GM12878 (cell line): ENCODE measurements at regions of chr5 and their contacts with region 1.

Region 1: DNA sequence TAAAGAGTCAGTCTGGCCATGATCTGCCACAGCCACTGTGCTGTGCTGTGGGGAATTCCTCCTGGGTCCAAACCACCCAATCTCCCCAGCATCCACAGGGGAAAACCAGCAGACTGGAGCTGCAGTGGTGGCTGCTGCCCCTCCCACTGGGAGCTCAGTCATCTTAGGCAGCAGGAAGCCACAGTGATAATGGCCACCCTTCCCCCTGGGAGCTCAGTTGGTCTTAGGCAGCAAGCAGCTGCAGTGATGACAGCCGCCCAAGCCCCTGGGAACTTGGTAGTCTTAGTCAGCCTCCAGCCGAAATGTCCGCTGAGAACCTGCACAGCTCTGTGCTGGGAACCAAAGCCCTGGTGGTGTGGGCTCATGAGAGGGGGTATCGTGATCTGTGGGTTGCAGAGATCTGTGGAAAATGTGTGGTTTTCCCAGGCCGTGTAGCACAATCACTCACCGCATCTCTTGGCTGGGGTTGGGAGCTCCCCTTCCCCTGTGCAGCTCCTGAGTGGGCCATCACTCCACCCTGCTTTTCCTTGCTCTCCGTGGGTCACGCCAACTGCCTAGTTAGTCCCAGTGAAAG is 38.4 kb upstream of the SMIM15 start:
- DNase-seq: peak; percentile 51
- ATAC-seq: peak; percentile 83
- H3K4me3 ChIP-seq: no peak overlapping the region
- H3K27ac ChIP-seq: peak overlapping the region; percentile 28; the same call in 1 of the 2 replicates
- H3K4me1 ChIP-seq: peaks cover 2% of the 10 kb centered on the region; the same call in 1 of the 2 replicates
- H3K27me3 ChIP-seq: no peaks in the 10 kb centered on the region
- CTCF ChIP-seq: no peak
- EP300 ChIP-seq: peak in 1 of 2 experiments; percentile 48; a peak in 2 of 4 replicates
- POLR2A ChIP-seq: no peak
- RAD21 ChIP-seq: no peak

Region 2: GRCh38 chr5:61139100-61139873 is 61.4 kb before region 1 on chr5:
- CTCF ChIA-PET with region 1: no interaction called
- POLR2A ChIA-PET with region 1: no interaction called
- RAD21 ChIA-PET with region 1: no interaction called
- SMC1A ChIA-PET with region 1: no interaction called
- in situ Hi-C with region 1: no loop called
- intact Hi-C with region 1: no loop called
- DNase-seq: no peak
- ATAC-seq: peak; percentile 83
- H3K4me3 ChIP-seq: no peak overlapping the region
- H3K27ac ChIP-seq: no peak overlapping the region
- H3K4me1 ChIP-seq: no peaks in the 10 kb centered on the region
- H3K27me3 ChIP-seq: no peaks in the 10 kb centered on the region
- CTCF ChIP-seq: peak; percentile 17 to 32 (median 26); a peak in 4 of 6 replicates
- EP300 ChIP-seq: no peak
- POLR2A ChIP-seq: no peak
- RAD21 ChIP-seq: peak; percentile 44

Region 3: DNA sequence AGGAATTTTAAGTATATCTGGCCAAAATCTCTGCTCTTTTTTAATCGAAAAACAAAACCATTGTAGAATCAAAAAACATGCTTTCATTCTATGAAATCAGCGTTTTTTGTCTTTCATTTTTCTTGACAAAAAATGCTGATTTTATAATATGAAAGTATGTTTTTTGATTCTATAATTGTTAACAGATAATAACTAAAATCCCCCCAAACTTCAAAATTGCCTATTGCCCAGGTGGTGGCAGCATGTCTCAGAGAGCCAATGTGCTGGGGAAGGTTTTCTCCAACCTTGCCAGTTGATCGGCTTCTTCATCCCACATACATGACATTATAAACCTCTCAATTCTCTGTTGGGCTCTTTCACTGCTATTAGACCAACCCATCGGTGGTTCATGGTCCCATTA is 33.3 kb before region 1 on chr5:
- CTCF ChIA-PET with region 1: interaction called, 6 read pairs
- POLR2A ChIA-PET with region 1: interaction called, 4 read pairs
- RAD21 ChIA-PET with region 1: interaction called, 14 read pairs
- SMC1A ChIA-PET with region 1: interaction called, 24 read pairs
- in situ Hi-C with region 1: no loop called
- intact Hi-C with region 1: loop called (anchors 1 kb)
- DNase-seq: no peak
- ATAC-seq: peak; percentile 33
- H3K4me3 ChIP-seq: no peak overlapping the region
- H3K27ac ChIP-seq: no peak overlapping the region
- H3K4me1 ChIP-seq: no peaks in the 10 kb centered on the region; the same call in 1 of the 2 replicates
- H3K27me3 ChIP-seq: no peaks in the 10 kb centered on the region
- CTCF ChIP-seq: peak; percentile 31 to 73 (median 37); a peak in 5 of 6 replicates
- EP300 ChIP-seq: no peak
- POLR2A ChIP-seq: no peak
- RAD21 ChIP-seq: peak; percentile 84

Region 4: GRCh38 chr5:61186634-61187033 is 14.0 kb before region 1 on chr5:
- CTCF ChIA-PET with region 1: interaction called, 7 read pairs
- POLR2A ChIA-PET with region 1: interaction called, 5 read pairs
- RAD21 ChIA-PET with region 1: interaction called, 3 read pairs
- SMC1A ChIA-PET with region 1: interaction called, 28 read pairs
- in situ Hi-C with region 1: no loop called
- intact Hi-C with region 1: no loop called
- DNase-seq: no peak
- ATAC-seq: no peak
- H3K4me3 ChIP-seq: no peak overlapping the region
- H3K27ac ChIP-seq: no peak overlapping the region
- H3K4me1 ChIP-seq: no peaks in the 10 kb centered on the region
- H3K27me3 ChIP-seq: no peaks in the 10 kb centered on the region
- CTCF ChIP-seq: no peak
- EP300 ChIP-seq: no peak
- POLR2A ChIP-seq: no peak
- RAD21 ChIP-seq: no peak

Region 5: DNA sequence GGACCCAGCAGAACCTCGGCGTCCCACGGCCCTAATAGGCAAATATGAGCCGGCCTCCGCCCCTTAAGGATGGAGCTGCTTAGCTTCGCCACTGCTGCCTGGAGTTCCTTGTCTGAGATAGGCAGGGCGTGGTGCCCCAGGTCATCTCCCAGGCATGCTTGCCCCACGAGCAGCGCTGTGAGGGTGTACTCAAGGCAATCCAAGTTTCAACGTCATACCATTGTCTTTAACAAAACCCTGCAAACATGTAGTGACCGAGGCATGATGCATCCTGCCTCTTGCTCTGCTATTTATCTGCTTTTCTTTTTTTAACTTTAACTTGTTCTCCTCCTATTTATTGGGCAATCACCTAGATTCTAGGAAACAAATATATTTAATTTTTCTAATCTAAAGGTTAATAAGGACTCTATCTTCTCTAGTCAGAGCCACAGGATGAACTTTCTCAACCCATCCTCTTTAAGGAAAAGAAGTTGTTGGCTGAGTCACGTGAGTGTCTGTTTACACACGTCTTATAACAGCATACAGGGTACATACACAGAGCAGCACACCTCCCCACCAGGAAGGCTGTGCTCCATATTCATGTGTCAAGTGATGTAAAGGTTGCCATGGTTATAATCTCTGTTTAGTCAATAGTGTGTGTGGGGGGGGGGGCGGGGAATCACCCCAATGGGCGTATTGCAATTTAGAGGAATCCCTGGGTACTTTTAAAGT is 104.1 kb after region 1 on chr5:
- CTCF ChIA-PET with region 1: no interaction called
- POLR2A ChIA-PET with region 1: no interaction called
- RAD21 ChIA-PET with region 1: interaction called, 4 read pairs
- SMC1A ChIA-PET with region 1: interaction called, 10 read pairs
- in situ Hi-C with region 1: no loop called
- intact Hi-C with region 1: no loop called
- DNase-seq: no peak
- ATAC-seq: peak; percentile 37; the same call in 2 of the 3 replicates
- H3K4me3 ChIP-seq: no peak overlapping the region
- H3K27ac ChIP-seq: no peak overlapping the region
- H3K4me1 ChIP-seq: peaks cover 15% of the 10 kb centered on the region
- H3K27me3 ChIP-seq: no peaks in the 10 kb centered on the region
- CTCF ChIP-seq: no peak
- EP300 ChIP-seq: no peak
- POLR2A ChIP-seq: no peak
- RAD21 ChIP-seq: no peak

Region 6: GRCh38 chr5:61362796-61363368 is 162.2 kb after region 1 on chr5:
- CTCF ChIA-PET with region 1: no interaction called
- POLR2A ChIA-PET with region 1: no interaction called
- RAD21 ChIA-PET with region 1: no interaction called
- SMC1A ChIA-PET with region 1: no interaction called
- in situ Hi-C with region 1: no loop called
- intact Hi-C with region 1: no loop called
- DNase-seq: no peak
- ATAC-seq: peak; percentile 70
- H3K4me3 ChIP-seq: no peak overlapping the region
- H3K27ac ChIP-seq: no peak overlapping the region
- H3K4me1 ChIP-seq: no peaks in the 10 kb centered on the region
- H3K27me3 ChIP-seq: no peaks in the 10 kb centered on the region
- CTCF ChIP-seq: peak in 2 of 3 experiments; percentile 17 to 22; a peak in 1 of 6 replicates
- EP300 ChIP-seq: no peak
- POLR2A ChIP-seq: no peak
- RAD21 ChIP-seq: peak; percentile 33; the same call in 1 of the 2 replicates

Region 7: DNA sequence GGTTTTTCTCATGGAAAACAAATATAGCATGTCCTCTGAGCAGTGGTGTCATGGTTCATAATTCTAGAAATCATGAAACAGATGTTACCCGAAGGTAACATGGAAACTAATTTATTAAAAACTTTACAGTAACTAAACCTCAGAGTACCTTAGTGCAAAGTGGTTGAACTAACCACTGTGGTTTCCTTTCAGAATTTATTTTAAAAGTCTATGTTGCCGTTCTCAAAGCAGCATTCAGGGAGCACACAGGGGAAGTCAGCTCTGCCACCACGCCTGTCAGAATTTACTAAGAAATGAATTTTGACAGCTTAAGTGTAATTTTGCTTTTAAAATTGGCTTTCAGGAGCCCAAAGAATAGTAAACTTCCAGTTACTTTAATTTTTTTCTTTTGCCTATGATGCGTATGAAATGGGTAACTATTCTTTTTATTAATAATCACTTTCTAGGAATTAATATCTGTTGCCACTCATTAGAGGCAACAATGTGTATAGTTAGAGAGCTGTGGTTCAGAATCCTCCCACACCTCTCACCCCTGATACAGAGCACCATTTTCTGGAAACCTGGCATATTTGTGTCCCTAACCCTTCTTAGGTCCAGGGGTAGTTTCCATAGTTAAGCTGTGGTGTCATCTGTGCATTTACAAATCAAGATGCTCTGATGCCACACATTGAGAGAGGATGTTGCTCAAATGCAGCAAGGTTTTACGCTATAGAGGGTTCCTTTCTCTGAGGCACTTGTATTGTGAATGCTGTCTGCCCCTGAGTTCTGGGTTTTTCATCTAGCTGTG is 334.0 kb after region 1 on chr5:
- CTCF ChIA-PET with region 1: no interaction called
- POLR2A ChIA-PET with region 1: no interaction called
- RAD21 ChIA-PET with region 1: interaction called, 5 read pairs
- SMC1A ChIA-PET with region 1: interaction called, 6 read pairs
- in situ Hi-C with region 1: no loop called
- intact Hi-C with region 1: loop called (anchors 5 kb)
- DNase-seq: peak; percentile 64
- ATAC-seq: peak; percentile 91
- H3K4me3 ChIP-seq: no peak overlapping the region
- H3K27ac ChIP-seq: no peak overlapping the region
- H3K4me1 ChIP-seq: peaks cover 9% of the 10 kb centered on the region
- H3K27me3 ChIP-seq: no peaks in the 10 kb centered on the region
- CTCF ChIP-seq: no peak
- EP300 ChIP-seq: peak in 1 of 2 experiments; percentile 37; a peak in 2 of 4 replicates
- POLR2A ChIP-seq: no peak
- RAD21 ChIP-seq: no peak